ENCODE measurements at regions of chr1 and their contacts with region 1.

Region 1: DNA sequence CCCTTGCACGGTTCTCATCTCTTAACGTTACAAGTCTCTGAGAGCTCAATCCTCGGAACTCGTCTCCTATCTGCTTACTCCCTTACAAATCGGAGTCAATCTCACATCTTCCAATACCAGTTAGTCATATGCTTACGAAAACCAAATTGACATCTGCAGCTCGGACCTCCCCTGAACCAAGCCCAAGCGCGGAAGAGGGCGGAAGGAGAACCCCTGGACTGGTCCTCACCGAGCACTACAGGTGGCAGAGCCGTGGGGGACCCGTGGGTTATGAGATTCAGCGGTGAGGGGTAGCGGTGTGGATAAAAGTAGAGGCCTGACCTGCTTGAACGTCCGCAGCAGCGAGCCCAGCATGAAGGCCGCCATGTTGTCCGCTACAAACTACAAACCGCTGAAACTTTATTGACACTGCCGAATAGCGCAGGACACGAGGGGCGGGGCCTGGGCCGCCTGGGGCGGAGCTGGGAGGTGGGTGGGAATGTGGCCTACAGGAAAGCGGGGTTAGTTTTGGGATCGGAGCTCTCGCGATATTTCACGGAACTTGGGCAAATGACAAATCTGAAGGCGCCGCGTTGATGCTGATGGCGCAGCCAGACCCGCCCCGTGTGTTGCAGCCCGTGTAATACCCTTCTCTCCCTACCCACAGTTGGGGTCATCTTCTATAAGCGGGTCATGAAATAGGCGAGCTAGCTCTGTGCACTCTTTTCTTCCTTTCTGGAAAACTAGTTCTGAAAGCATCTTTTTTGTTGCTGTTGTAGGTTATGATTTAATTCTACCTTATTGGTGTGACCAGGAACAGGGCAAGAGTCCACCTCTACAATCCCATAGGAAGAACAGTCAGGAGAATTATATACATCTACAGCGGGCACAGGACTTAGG is at the start of gene MRPS14:
- DNase-seq: peak; percentile 99
- H3K4me3 Mint-ChIP-seq: peak within 1 kb of the TSS; percentile 91
- H3K27ac Mint-ChIP-seq: peak within 1 kb of the TSS; percentile 90
- H3K4me1 Mint-ChIP-seq: peaks cover 23% of the 10 kb centered on the region
- H3K27me3 Mint-ChIP-seq: no peaks in the 10 kb centered on the region
- total RNA-seq, gene MRPS14: 28.9 and 33.5 TPM in 2 replicates

Region 2: GRCh38 chr1:174990382-174990999 is 32.8 kb before region 1 on chr1:
- intact Hi-C with region 1: no loop called
- DNase-seq: peak; percentile 70
- H3K4me3 Mint-ChIP-seq: peak overlapping the region; percentile 84
- H3K27ac Mint-ChIP-seq: peak overlapping the region; percentile 87
- H3K4me1 Mint-ChIP-seq: peaks cover 18% of the 10 kb centered on the region
- H3K27me3 Mint-ChIP-seq: no peaks in the 10 kb centered on the region

Region 3: DNA sequence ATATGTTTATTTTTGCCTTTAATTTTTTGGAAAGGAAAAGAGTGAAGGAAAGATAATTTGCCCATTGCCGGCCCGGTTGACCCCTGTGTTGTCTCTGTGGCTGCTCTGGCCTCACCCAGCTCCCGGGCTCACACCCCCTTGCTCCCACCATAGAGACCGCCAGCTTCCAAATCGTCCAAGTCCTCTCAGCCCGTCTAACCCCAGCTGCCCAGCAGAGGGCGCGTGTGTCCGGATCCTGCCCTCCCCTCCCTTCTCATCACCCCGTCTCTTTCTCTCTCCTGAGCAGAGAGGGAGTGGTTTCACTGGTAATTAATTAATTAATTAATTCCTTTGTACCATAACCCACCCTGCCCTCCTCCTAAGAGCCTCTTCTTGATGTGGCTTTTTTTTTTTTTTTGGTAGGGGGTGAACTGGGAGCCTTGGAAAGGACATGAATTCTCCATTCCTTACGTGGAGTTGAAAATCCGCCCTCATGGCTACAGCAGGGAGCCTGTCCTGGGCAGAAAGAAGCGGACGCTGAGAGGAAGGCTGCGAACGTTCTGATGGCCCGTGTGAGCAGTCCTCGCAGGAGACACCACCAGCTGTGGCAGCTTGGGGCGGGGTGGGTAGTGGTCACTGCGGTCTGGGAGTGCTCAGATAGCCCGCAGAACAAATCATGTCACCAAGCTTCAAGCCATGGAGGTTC is 123.4 kb after region 1 on chr1:
- intact Hi-C with region 1: loop called (anchors 2 kb)
- DNase-seq: peak; percentile 90
- H3K4me3 Mint-ChIP-seq: no peak overlapping the region
- H3K27ac Mint-ChIP-seq: no peak overlapping the region
- H3K4me1 Mint-ChIP-seq: peaks cover 3% of the 10 kb centered on the region
- H3K27me3 Mint-ChIP-seq: peaks cover 33% of the 10 kb centered on the region

Region 4: GRCh38 chr1:175319418-175320230 is 296.3 kb after region 1 on chr1:
- intact Hi-C with region 1: loop called (anchors 2 kb)
- DNase-seq: peak; percentile 90
- H3K4me3 Mint-ChIP-seq: no peak overlapping the region
- H3K27ac Mint-ChIP-seq: no peak overlapping the region
- H3K4me1 Mint-ChIP-seq: peaks cover 10% of the 10 kb centered on the region
- H3K27me3 Mint-ChIP-seq: peaks cover 14% of the 10 kb centered on the region

Measured in activated CD4-positive, alpha-beta T cell treated with anti-CD3 and anti-CD28 coated beads, Interleukin-2, amount 10 ng/mL, durations not matched to agents 24 days and 14 days (primary cell).